ENCODE measurements at regions of chr12 and their contacts with region 1.

Region 1: GRCh38 chr12:64679487-64679983 is 69.2 kb downstream of the RASSF3 start:
- ATAC-seq: peak in 3 of 8 experiments; percentile 83 to 97 (median 95)
- H3K4me3 ChIP-seq: no peak overlapping the region
- H3K27ac ChIP-seq: no peak overlapping the region
- H3K4me1 ChIP-seq: peaks cover 0 to 6% of the 10 kb centered on the region in 2 donors

Region 2: GRCh38 chr12:63467951-63468350 is 1211.6 kb before region 1 on chr12:
- in situ Hi-C with region 1: no loop called
- ATAC-seq: no peak
- H3K4me3 ChIP-seq: no peak overlapping the region
- H3K27ac ChIP-seq: no peak overlapping the region
- H3K4me1 ChIP-seq: no peaks in the 10 kb centered on the region

Region 3: GRCh38 chr12:64528616-64529015 is 150.9 kb before region 1 on chr12:
- in situ Hi-C with region 1: loop called in 1 of 9 experiments (anchors 25 kb)
- ATAC-seq: no peak
- H3K4me3 ChIP-seq: no peak overlapping the region
- H3K27ac ChIP-seq: no peak overlapping the region
- H3K4me1 ChIP-seq: peaks cover 3 to 5% of the 10 kb centered on the region in 2 donors

Region 4: GRCh38 chr12:64560396-64561304 is 118.9 kb before region 1 on chr12:
- in situ Hi-C with region 1: loop called in 1 of 9 experiments (anchors 25 kb)
- ATAC-seq: peak; percentile 92 to 99 (median 97)
- H3K4me3 ChIP-seq: no peak overlapping the region
- H3K27ac ChIP-seq: no peak overlapping the region
- H3K4me1 ChIP-seq: peaks cover 5 to 11% of the 10 kb centered on the region in 2 donors

Region 5: GRCh38 chr12:64767495-64767894 is 88.0 kb after region 1 on chr12:
- in situ Hi-C with region 1: no loop called
- ATAC-seq: no peak
- H3K4me3 ChIP-seq: no peak overlapping the region
- H3K27ac ChIP-seq: no peak overlapping the region
- H3K4me1 ChIP-seq: no peaks in the 10 kb centered on the region

Measured in motor neuron (in vitro differentiated cells).